ENCODE measurements at regions of chr16 and their contacts with region 1.

Region 1: GRCh38 chr16:85615852-85616606 is 2.9 kb downstream of the GSE1 start:
- DNase-seq: peak; percentile 68 to 88 (median 83)
- H3K4me3 ChIP-seq: peak overlapping the region; percentile 55
- H3K4me3 Mint-ChIP-seq: peak overlapping the region; percentile 76 to 94 (median 82)
- H3K27ac ChIP-seq: peak overlapping the region; percentile 69
- H3K27ac Mint-ChIP-seq: peak overlapping the region; percentile 61 to 90 (median 82)
- H3K4me1 ChIP-seq: peaks cover 36% of the 10 kb centered on the region
- H3K4me1 Mint-ChIP-seq: peaks cover 32 to 63% (median 49%) of the 10 kb centered on the region in 3 donors
- H3K27me3 ChIP-seq: no peaks in the 10 kb centered on the region
- H3K27me3 Mint-ChIP-seq: no peaks in the 10 kb centered on the region

Region 2: DNA sequence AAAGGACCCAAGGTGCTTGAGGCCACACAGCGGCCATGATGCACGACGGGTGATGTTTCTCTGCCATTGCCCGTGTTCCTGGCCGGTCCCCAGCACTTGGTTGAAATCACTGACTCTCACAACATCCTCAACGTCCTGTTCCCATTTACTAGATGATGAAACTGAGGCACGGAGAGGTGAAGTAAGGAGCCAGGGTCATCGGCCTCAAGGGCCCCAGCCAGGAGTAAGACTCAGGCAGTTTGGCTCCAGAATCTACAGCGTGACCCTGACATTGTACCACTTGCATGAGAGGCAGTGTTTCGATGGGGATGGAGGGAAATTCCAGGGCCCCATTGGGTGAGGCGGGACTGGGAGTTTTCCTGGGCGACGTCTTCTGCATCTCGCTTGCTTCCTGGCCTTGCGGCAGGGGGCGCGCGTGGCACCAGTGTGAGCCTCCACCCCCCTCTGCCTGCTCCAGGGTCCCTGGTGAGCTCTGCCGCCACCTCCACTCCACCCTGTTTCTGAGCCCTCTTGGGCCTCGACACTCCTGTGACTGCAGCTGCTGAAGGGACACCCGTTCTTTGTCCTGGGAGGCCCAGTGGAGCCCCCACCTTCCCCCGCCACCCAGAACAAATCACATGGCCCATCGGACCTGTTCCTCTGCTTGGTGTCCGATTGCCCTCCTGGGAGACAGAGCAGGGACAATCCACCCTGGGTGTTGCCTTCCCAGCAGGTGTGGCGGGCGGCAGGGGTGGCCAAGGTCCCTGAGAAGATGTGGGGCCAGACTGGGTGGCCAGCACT is 135.9 kb before region 1 on chr16:
- CTCF ChIA-PET with region 1: interaction called, 14 read pairs
- POLR2A ChIA-PET with region 1: no interaction called
- DNase-seq: peak in 3 of 5 donors; percentile 6 to 53 (median 25)
- H3K4me3 ChIP-seq: no peak overlapping the region
- H3K4me3 Mint-ChIP-seq: no peak overlapping the region
- H3K27ac ChIP-seq: no peak overlapping the region
- H3K27ac Mint-ChIP-seq: peak overlapping the region in 1 of 8 donors; percentile 14
- H3K4me1 ChIP-seq: no peaks in the 10 kb centered on the region
- H3K4me1 Mint-ChIP-seq: no peaks in the 10 kb centered on the region
- H3K27me3 ChIP-seq: no peaks in the 10 kb centered on the region
- H3K27me3 Mint-ChIP-seq: peaks cover 1 to 3% of the 10 kb centered on the region in 2 donors

Region 3: DNA sequence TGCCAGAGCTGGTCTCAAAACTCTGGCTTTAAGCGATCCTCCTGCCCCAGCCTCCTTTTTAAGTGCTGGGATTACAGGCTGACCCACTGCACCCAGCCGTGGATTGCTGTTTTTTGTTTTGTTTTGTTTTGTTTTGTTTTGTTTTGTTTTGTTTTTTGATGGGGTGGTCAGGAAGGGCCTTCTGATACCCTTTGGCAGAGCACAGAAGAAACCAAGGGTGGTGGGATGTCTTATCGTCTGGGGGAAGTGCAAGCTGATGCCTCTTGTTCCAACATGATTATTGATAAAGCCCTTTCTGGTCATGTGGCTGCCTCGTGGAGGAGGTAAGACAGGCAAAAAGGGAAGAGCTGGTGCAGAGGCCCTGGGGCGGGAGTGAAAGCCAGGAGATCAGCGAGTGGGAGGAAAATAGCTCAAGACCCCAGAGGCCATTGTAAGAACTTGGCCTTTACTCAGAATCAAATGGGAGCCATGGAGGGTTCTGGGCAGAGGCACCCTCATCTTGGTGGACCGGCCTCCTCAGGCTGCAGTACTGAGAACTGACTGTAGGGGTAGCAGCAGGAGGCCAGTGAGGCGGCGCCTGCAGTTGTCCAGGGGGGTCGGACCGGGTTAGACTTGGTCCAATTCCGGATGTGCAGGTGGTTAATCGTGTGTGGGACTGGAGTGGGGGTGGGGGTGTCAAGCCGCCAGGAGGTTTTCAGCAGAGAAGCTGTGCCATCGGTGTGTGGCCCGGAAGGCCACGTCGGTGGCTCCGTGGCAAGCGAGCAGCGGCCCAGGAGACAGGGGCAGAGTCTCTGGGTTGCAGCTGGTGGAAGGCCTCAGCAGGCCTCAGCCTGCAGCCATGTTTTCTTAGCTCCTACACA is 87.3 kb before region 1 on chr16:
- CTCF ChIA-PET with region 1: interaction called, 11 read pairs
- POLR2A ChIA-PET with region 1: interaction called, 3 read pairs
- DNase-seq: peak in 2 of 5 donors; percentile 9 to 13
- H3K4me3 ChIP-seq: no peak overlapping the region
- H3K4me3 Mint-ChIP-seq: no peak overlapping the region
- H3K27ac ChIP-seq: peak overlapping the region; percentile 51
- H3K27ac Mint-ChIP-seq: peak overlapping the region in 1 of 8 donors; percentile 29
- H3K4me1 ChIP-seq: no peaks in the 10 kb centered on the region
- H3K4me1 Mint-ChIP-seq: no peaks in the 10 kb centered on the region
- H3K27me3 ChIP-seq: no peaks in the 10 kb centered on the region
- H3K27me3 Mint-ChIP-seq: peaks cover 0 to 4% of the 10 kb centered on the region in 2 donors

Region 4: DNA sequence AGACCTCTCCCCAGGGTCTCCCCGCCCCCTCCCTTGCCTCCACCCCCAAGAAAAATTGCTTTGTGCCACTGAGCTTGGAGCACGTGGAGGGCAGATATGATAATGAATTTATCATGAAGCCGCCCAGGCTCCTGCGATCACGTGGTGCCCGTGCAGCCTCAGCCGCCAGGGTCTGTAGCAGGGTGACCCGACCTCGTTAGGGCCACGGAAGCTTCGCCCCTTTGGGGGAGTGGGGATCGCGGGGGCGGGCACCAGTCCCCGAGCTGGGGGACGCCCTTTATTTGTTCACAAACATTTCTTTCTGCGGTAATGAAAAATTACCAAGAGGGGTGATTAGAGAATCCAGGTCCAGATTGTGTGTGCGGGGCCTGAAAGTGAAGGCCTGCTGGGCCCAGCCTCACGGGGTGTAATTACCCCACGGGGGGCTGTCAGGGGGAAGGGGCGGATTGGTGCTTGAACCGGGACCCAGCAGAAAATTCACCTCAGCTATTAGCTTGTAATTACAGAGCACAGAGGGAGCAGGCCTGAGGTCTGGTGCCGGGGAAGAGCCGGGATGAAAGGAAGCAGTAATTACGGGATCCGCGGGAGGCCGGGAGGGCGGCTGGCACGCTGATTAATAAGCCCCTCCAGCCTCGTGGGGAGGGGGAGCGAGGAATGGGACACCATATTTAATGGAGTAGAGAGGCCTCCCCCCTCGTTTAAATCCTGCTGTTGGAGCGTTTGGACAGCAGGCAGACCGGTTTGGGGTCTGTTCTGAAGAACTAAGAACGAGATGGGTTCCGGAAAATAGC is 10.4 kb after region 1 on chr16:
- CTCF ChIA-PET with region 1: interaction called, 16 read pairs
- POLR2A ChIA-PET with region 1: interaction called, 3 read pairs
- DNase-seq: no peak
- H3K4me3 ChIP-seq: no peak overlapping the region
- H3K4me3 Mint-ChIP-seq: peak overlapping the region in 3 of 7 donors; percentile 29 to 50 (median 48)
- H3K27ac ChIP-seq: no peak overlapping the region
- H3K27ac Mint-ChIP-seq: peak overlapping the region in 3 of 8 donors; percentile 23 to 55 (median 41)
- H3K4me1 ChIP-seq: no peaks in the 10 kb centered on the region
- H3K4me1 Mint-ChIP-seq: peaks cover 46 to 81% (median 52%) of the 10 kb centered on the region in 3 donors
- H3K27me3 ChIP-seq: no peaks in the 10 kb centered on the region
- H3K27me3 Mint-ChIP-seq: peaks cover 0 to 3% of the 10 kb centered on the region in 2 donors

Region 5: DNA sequence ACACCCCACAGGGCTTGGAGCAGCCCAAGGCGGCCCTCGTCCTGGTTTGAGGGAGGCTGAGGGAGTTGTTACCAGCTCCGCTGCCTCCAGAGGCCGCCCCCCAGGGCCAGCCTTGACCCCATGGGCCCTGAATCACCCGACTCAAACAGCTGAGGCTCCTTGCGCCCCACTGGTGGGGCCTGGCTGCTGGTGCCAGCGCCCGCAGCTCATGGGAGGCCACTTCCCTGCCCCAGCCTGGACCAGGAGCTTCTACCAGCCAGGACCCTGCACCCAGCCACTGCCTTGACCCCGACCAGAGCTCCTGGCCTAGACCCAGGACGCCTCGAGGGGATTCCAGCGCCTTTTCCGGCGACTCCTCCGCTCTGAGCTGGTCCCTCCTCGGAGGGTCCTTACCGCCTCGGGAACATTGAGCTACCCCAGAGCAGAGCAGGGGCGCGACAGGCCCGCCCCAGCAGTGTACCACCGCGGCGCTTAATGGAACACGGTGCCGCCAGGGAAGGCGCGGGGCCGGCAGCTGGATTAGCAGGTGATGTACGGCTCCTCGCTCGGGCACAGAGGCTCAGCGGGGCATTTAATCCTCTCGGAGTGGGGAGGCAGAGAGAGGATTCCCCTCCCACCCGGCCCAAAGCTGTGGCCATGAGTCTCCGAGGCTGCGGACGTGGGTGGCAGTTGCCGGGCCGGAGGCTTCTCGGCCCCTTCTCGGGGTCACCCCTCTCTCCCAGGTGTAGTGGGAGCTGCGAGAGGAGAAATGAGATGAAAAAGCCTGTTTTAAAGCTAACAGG is 34.3 kb after region 1 on chr16:
- CTCF ChIA-PET with region 1: no interaction called
- POLR2A ChIA-PET with region 1: no interaction called
- DNase-seq: no peak
- H3K4me3 ChIP-seq: no peak overlapping the region
- H3K4me3 Mint-ChIP-seq: no peak overlapping the region
- H3K27ac ChIP-seq: no peak overlapping the region
- H3K27ac Mint-ChIP-seq: peak overlapping the region in 2 of 8 donors; percentile 33 to 64
- H3K4me1 ChIP-seq: no peaks in the 10 kb centered on the region
- H3K4me1 Mint-ChIP-seq: peaks cover 4 to 22% (median 6%) of the 10 kb centered on the region in 3 donors
- H3K27me3 ChIP-seq: no peaks in the 10 kb centered on the region
- H3K27me3 Mint-ChIP-seq: no peaks in the 10 kb centered on the region

Measured in CD8-positive, alpha-beta memory T cell (primary cell).